ENCODE measurements at regions of chr13 and their contacts with region 1.

Region 1: DNA sequence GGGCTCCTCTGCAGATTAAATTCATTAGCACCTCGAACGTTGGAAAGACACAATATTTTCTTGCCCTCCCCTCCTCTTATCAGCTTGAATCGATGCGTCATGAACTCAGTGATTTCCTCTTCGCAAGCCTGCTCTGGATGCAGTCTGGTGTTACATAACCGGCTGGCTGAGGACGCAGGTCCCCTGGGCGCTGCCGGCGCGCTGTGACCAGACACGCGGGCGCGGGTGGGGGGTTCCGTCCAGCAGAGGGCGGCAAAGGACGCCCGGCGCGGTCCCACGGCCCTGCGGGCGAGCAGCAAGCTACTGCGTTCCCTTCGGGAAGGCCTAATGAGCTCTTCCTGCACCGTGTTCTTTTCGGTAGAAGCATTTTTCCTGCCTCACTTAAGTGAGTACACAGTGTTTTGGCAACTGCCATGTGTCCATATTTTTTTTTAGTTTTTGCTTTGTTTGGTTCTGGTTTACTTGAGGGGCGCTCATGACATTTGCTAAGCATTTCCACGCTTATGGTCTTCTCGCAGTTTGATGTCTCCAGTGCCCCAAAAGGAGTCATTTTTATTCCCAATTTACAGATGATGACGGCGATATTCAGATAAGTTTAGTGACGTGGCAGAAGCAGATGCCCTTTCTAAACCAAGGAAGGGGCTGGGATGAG is 112.2 kb upstream of the MBNL2 start:
- DNase-seq: peak; percentile 91 to 94
- ATAC-seq: peak; percentile 96 to 98 (median 98)
- H3K4me3 ChIP-seq: peak overlapping the region in 7 of 10 donors; percentile 5 to 38 (median 26)
- H3K27ac ChIP-seq: peak overlapping the region in 5 of 10 donors; percentile 24 to 60 (median 45)
- H3K4me1 ChIP-seq: peaks cover 0 to 32% (median 23%) of the 10 kb centered on the region in 9 donors
- H3K27me3 ChIP-seq: peaks cover 0 to 5% (median 0%) of the 10 kb centered on the region in 7 donors
- CTCF ChIP-seq: peak; percentile 94 to 100 (median 99)

Region 2: DNA sequence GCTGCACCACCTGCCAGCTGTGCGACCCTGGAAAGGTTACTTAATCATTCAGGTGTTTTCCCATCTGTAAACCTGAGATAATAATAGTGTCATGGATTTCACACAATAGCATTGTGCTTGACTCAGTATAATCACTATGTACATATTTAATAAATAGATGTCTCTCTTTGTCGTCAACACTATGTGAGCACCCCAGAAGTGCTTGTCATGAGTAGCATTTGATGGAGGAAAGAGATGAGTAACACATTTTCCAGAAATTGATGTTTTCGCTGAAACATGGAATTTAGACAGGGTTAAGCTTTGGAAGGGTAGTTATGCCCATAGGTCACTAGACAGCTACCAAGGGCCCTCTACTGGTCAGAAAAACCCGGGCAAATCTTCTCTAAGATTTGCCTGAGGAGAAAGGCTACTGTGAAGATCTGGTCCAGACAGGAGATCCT is 102.7 kb after region 1 on chr13:
- intact Hi-C with region 1: loop called in 7 of 10 experiments (anchors 1 to 5 kb)
- DNase-seq: no peak
- ATAC-seq: peak in 4 of 8 donors; percentile 65 to 80 (median 70)
- H3K4me3 ChIP-seq: no peak overlapping the region
- H3K27ac ChIP-seq: no peak overlapping the region
- H3K4me1 ChIP-seq: peaks cover 0 to 25% (median 0%) of the 10 kb centered on the region in 9 donors
- H3K27me3 ChIP-seq: peaks cover 0 to 14% (median 0%) of the 10 kb centered on the region in 7 donors
- CTCF ChIP-seq: peak; percentile 16 to 65 (median 51)

Region 3: DNA sequence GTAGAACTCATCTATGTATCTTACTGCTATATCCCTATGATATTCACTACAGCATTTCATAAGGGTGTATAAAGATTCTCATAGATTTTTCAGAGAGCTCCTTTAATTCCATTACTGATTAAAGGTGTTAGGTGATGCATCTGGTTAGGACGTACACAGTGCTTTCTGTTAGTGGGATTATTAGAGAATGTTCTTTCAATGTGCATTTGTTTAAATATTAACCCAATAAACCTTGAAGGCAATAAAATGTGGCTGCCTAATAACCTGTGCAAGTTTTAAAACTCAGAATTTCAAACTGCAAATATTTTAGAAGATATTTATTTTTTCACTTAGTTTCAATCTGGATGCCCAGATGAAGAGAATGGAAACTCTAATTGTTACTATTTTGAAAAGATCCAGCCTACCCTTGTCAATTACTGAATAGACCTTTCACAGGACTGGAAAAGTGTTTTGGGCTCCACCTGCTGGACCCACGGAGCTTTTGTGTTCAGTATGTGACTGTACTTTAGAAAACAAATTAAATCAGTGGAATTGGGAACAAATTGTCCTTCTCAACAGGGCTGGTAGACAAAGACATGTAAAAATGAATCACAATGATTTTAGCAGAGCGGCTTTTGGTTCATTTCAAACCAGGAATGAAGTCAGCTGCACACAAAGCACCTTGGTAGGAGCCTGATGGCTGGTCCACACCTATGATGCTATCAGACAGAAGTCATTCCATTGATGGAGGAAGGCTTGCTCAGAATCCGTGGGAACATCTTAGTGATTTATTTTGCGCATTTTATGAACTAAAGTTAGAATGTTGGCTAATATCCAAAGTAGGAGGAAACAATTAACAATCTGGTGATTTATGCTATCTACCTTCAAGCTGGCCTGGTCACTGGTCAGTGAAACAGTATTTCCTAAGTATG is 234.6 kb after region 1 on chr13:
- intact Hi-C with region 1: loop called in 9 of 10 experiments (anchors 1 to 5 kb)
- DNase-seq: peak; percentile 49 to 70
- ATAC-seq: peak; percentile 74 to 89 (median 83)
- H3K4me3 ChIP-seq: no peak overlapping the region
- H3K27ac ChIP-seq: peak overlapping the region in 5 of 10 donors; percentile 1 to 33 (median 13)
- H3K4me1 ChIP-seq: peaks cover 0 to 51% (median 29%) of the 10 kb centered on the region in 9 donors
- H3K27me3 ChIP-seq: no peaks in the 10 kb centered on the region
- CTCF ChIP-seq: peak; percentile 50 to 87 (median 70)

Region 4: GRCh38 chr13:97359181-97360057 is 249.5 kb after region 1 on chr13:
- intact Hi-C with region 1: loop called in 7 of 10 experiments (anchors 1 to 5 kb)
- DNase-seq: peak in 1 of 2 donors; percentile 62
- ATAC-seq: peak; percentile 76 to 93 (median 89)
- H3K4me3 ChIP-seq: no peak overlapping the region
- H3K27ac ChIP-seq: peak overlapping the region in 4 of 10 donors; percentile 2 to 38 (median 18)
- H3K4me1 ChIP-seq: peaks cover 0 to 54% (median 26%) of the 10 kb centered on the region in 9 donors
- H3K27me3 ChIP-seq: no peaks in the 10 kb centered on the region
- CTCF ChIP-seq: peak; percentile 67 to 94 (median 87)

Region 5: DNA sequence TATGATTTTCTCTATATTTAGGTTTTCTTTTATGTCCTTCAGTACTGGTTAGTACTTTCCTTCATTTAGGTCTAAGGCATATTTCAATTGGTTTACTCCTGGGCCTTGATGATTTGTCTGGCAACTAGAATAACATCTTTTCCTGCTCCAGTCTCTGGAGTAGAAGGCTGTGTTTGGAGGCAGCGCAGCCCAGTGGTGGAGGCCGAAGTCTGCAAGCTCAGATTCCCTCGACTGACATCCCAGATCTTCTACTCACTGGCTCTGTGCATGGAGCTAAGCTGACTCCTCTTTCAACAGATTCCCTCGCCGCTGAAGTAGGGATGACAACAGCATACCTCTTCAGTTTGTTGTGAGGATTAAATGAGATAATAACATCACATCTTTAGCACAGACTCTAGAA is 465.0 kb after region 1 on chr13:
- intact Hi-C with region 1: loop called in 1 of 10 experiments (anchors 5 kb)
- DNase-seq: peak; percentile 9 to 27
- ATAC-seq: peak in 5 of 8 donors; percentile 42 to 68 (median 58)
- H3K4me3 ChIP-seq: no peak overlapping the region
- H3K27ac ChIP-seq: no peak overlapping the region
- H3K4me1 ChIP-seq: peaks cover 0 to 3% (median 0%) of the 10 kb centered on the region in 9 donors
- H3K27me3 ChIP-seq: no peaks in the 10 kb centered on the region
- CTCF ChIP-seq: peak in 8 of 9 donors; percentile 36 to 65 (median 44)

Region 6: GRCh38 chr13:97686594-97686993 is 576.6 kb after region 1 on chr13:
- intact Hi-C with region 1: loop called in 1 of 10 experiments (anchors 10 kb)
- DNase-seq: no peak
- ATAC-seq: no peak
- H3K4me3 ChIP-seq: no peak overlapping the region
- H3K27ac ChIP-seq: no peak overlapping the region
- H3K4me1 ChIP-seq: no peaks in the 10 kb centered on the region
- H3K27me3 ChIP-seq: peaks cover 0 to 17% (median 0%) of the 10 kb centered on the region in 7 donors
- CTCF ChIP-seq: no peak